Posterior vena cava (tissue), 2 donors: ENCODE measurements at regions of chr13 and their contacts with region 1.

Region 1: GRCh38 chr13:76828316-76828741 is 57.9 kb downstream of the KCTD12 start:
- DNase-seq: no peak

Region 2: GRCh38 chr13:76647550-76647949 is 180.8 kb before region 1 on chr13:
- intact Hi-C with region 1: no loop called
- DNase-seq: no peak

Region 3: DNA sequence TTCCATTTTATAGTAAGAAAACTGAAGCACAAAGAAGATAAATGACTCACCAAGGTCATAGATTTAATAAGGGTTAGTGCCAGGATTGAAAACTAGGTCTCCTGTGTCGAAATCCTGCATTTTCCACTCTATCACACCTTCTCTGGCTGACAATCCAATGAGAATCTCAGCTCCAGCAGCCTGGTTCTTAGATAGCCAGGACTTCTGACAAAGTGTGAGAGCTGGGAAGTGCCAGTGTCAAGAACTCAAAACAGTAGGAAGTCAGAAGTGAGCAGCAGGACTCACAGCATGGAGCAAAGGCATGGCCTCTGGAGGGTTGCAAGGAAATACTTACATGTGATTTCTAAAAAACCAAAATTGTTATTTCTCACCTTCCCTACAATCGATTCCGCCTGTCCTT is 33.5 kb after region 1 on chr13:
- intact Hi-C with region 1: no loop called
- DNase-seq: no peak

Region 4: DNA sequence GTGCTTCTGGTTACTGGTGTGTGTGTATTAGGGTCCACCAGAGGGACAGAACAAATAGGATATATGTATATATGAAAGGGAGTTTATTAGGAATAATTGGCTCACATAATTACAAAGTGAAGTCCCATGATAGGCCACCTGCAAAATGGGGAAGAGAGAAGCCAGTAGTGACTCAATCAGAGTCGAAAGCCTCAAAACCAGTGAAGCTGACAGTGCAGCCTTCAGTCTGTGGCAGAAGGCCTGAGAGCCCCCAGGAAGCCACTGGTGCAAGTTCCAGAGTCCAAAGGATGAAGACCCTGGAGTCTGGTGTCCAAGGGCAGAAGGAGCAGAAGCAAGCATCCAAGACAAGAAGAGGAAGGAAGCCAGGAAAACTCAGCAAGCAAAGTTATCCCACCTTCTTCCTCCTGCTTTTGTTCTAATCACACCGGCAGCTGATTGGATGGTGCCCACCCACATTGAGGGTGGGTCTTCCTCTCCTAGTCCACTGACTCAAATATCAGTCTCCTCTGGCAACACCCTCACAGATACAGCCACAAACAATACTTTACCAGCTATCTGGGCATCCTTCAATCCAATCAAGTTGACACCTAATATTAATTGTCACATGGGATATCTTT is 685.5 kb after region 1 on chr13:
- intact Hi-C with region 1: loop called in 1 of 2 experiments (anchors 5 kb)
- DNase-seq: no peak